B cell (primary cell): ENCODE measurements at regions of chrX and their contacts with region 1.

Region 1: DNA sequence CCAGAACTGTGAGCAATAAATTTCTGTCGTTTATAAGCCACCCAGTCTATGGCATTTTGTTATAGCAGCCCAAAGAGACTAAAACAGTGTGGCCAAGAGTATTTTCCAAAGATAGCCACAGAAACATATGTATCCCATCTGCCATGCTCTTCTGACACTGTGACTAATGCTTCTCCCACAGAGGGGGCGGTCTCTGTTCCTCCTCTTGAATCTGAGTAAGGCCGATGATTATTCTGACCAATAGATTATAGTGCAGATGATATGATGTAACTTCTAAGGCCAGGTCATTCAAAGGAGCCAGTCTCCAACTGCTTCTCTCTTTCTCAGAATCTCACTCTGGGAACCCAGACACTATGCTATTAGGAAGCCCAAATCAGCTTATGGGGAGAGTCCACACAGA is 570.7 kb downstream of the BCOR start:
- DNase-seq: no peak
- ATAC-seq: no peak
- H3K4me3 ChIP-seq: no peak overlapping the region
- H3K4me3 Mint-ChIP-seq: no peak overlapping the region
- H3K27ac ChIP-seq: no peak overlapping the region
- H3K27ac Mint-ChIP-seq: no peak overlapping the region
- H3K4me1 ChIP-seq: no peaks in the 10 kb centered on the region
- H3K4me1 Mint-ChIP-seq: no peaks in the 10 kb centered on the region
- H3K27me3 ChIP-seq: no peaks in the 10 kb centered on the region
- H3K27me3 Mint-ChIP-seq: no peaks in the 10 kb centered on the region
- CTCF ChIP-seq: no peak

Region 2: DNA sequence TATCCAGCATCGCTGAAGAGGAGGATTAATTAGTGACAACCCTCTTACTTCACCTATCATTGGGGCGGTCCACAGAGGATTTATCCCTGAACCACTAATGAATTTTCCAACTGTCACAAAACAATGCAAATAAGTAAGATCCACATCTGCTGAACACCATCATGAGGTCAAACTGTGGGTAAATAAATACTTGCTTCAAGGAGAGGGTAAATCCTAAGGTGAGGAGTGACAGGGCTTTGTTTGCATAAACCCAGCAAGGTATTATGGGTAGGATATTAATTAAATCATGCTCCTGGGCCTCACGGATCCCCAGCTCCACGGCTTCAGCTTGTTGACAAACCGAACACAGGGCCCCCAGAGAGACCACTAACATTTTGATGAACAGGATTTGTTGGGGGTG is 142.8 kb before region 1 on chrX:
- CTCF ChIA-PET with region 1: no interaction called
- POLR2A ChIA-PET with region 1: interaction called, 11 read pairs
- intact Hi-C with region 1: no loop called
- DNase-seq: no peak
- ATAC-seq: no peak
- H3K4me3 ChIP-seq: no peak overlapping the region
- H3K4me3 Mint-ChIP-seq: no peak overlapping the region
- H3K27ac ChIP-seq: no peak overlapping the region
- H3K27ac Mint-ChIP-seq: no peak overlapping the region
- H3K4me1 ChIP-seq: no peaks in the 10 kb centered on the region
- H3K4me1 Mint-ChIP-seq: no peaks in the 10 kb centered on the region
- H3K27me3 ChIP-seq: no peaks in the 10 kb centered on the region
- H3K27me3 Mint-ChIP-seq: peaks cover 15% of the 10 kb centered on the region
- CTCF ChIP-seq: no peak